Activated naive CD4-positive, alpha-beta T cell treated with anti-CD3 and anti-CD28 coated beads for 36 hours (primary cell): ENCODE measurements at regions of chr7 and their contacts with region 1.

Region 1: DNA sequence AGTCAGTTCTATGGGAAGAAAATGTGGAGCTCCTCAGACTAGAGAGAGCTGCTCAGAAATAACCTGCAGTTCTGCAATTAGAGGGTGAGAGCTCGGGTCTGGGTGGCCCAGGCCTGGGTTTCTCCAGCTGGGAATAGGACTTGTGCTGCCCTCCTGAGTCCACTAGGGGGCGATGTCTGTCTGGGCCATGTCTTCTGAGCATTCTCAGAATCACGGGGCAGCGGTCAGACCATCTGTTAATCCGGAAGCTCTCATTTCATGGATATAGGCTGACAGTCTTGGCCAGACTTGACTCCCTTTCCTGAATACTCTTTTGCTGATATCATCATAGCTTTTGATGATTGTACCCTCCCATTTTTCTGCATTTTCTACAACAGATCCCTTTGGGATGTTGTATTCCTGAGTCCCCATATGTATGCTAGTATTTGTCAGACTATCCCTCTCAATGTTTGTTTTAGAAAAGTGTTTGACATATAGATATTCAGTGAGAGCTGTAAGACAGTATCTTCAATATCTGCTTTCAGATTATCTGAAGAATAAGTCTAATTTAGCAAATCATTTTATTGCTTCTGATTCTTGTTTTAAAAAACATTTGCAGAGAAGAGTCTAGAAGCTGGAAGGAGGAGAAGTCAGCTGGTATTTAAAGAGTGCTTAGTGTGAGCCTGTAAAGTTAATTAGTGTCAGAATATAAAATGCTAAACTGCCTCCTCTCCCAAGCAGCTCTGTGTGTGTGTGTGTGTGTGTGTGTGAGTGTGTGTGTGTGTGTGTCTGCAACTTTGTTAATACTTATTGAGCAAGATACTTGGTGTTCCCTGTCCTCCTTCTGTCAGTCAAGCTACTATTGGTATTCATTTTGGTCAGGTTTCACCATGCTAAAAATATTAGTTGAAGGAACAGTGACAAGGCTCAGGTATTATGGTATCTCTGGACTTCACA is 38.0 kb downstream of the STARD3NL start:
- DNase-seq: peak; percentile 86
- H3K4me3 Mint-ChIP-seq: no peak overlapping the region
- H3K27ac Mint-ChIP-seq: no peak overlapping the region
- H3K4me1 Mint-ChIP-seq: peaks cover 4% of the 10 kb centered on the region
- H3K27me3 Mint-ChIP-seq: no peaks in the 10 kb centered on the region

Region 2: DNA sequence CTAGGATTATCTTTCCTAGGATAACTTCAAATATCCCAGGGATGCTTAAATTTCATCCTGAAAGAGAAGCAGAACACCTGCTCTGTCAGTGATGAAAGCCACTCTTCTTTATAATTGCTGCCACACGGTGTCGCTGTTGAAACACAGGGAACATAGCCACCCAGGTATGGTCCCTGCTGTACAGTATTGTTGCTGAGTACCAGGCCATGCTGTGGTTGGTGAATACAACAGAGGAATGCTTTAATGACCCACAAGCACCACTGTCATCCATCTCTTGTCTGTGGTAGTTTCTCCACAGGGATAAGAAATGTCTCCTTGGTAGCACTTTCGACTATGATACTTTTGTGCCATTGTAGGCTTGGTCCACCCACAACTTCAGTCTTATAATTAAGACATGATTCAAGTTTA is 108.5 kb before region 1 on chr7:
- CTCF ChIA-PET with region 1: interaction called, 81 read pairs
- intact Hi-C with region 1: no loop called
- DNase-seq: peak; percentile 84
- H3K4me3 Mint-ChIP-seq: no peak overlapping the region
- H3K27ac Mint-ChIP-seq: no peak overlapping the region
- H3K4me1 Mint-ChIP-seq: no peaks in the 10 kb centered on the region
- H3K27me3 Mint-ChIP-seq: peaks cover 8% of the 10 kb centered on the region

Region 3: GRCh38 chr7:38186593-38187314 is 29.2 kb before region 1 on chr7:
- CTCF ChIA-PET with region 1: interaction called, 18 read pairs
- intact Hi-C with region 1: no loop called
- DNase-seq: no peak
- H3K4me3 Mint-ChIP-seq: no peak overlapping the region
- H3K27ac Mint-ChIP-seq: no peak overlapping the region
- H3K4me1 Mint-ChIP-seq: peaks cover 41% of the 10 kb centered on the region
- H3K27me3 Mint-ChIP-seq: no peaks in the 10 kb centered on the region

Region 4: GRCh38 chr7:38195804-38196595 is 20.0 kb before region 1 on chr7:
- CTCF ChIA-PET with region 1: interaction called, 60 read pairs
- intact Hi-C with region 1: no loop called
- DNase-seq: no peak
- H3K4me3 Mint-ChIP-seq: no peak overlapping the region
- H3K27ac Mint-ChIP-seq: no peak overlapping the region
- H3K4me1 Mint-ChIP-seq: peaks cover 26% of the 10 kb centered on the region
- H3K27me3 Mint-ChIP-seq: no peaks in the 10 kb centered on the region

Region 5: DNA sequence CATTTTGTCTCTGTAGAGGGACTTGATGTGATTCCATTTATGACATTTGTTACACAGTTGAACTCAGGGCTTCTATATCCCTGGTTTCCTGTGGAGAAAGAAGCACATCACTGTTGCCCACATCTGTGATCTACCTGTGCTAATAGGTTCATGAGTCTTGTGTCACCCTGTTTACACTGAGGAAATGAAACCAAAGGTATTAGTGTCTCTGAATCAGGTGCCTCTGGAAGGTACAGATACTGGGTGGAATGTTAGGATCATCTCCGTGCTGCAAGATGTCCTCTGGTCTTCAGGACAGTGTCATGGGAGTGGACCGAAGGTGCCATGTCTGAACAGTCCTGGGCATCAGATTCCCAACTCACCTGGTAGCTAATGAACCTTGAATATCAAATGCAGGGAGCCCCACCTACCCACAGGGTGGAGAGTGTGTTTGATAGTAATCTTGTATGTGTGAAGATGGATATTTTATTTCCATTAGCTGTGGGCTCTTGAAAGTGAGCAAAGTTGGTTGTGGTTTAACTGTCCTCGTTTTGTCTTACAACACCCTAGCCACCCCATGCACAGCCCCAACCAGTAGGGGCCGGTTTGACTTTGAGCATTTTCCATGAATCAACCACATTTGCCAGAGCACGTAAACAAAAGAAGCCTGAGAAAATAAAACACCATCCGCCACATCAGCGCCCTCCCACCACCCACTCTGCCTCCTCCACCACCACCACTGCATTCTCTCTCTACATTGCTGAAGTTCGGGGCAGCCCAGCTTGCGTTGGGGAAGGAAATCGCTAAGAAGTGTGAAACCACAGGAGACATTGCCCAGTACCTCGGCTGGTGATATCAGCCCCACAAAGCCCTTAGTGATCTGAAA is 16.7 kb after region 1 on chr7:
- CTCF ChIA-PET with region 1: interaction called, 41 read pairs
- intact Hi-C with region 1: no loop called
- DNase-seq: peak; percentile 82
- H3K4me3 Mint-ChIP-seq: peak overlapping the region; percentile 9
- H3K27ac Mint-ChIP-seq: peak overlapping the region; percentile 2
- H3K4me1 Mint-ChIP-seq: peaks cover 21% of the 10 kb centered on the region
- H3K27me3 Mint-ChIP-seq: no peaks in the 10 kb centered on the region

Region 6: GRCh38 chr7:38318803-38319416 is 102.9 kb after region 1 on chr7:
- CTCF ChIA-PET with region 1: interaction called, 27 read pairs
- intact Hi-C with region 1: loop called (anchors 1 kb)
- DNase-seq: peak; percentile 33
- H3K4me3 Mint-ChIP-seq: peak overlapping the region; percentile 27
- H3K27ac Mint-ChIP-seq: no peak overlapping the region
- H3K4me1 Mint-ChIP-seq: peaks cover 26% of the 10 kb centered on the region
- H3K27me3 Mint-ChIP-seq: no peaks in the 10 kb centered on the region